ENCODE measurements at regions of chr2 and their contacts with region 1.

Region 1: DNA sequence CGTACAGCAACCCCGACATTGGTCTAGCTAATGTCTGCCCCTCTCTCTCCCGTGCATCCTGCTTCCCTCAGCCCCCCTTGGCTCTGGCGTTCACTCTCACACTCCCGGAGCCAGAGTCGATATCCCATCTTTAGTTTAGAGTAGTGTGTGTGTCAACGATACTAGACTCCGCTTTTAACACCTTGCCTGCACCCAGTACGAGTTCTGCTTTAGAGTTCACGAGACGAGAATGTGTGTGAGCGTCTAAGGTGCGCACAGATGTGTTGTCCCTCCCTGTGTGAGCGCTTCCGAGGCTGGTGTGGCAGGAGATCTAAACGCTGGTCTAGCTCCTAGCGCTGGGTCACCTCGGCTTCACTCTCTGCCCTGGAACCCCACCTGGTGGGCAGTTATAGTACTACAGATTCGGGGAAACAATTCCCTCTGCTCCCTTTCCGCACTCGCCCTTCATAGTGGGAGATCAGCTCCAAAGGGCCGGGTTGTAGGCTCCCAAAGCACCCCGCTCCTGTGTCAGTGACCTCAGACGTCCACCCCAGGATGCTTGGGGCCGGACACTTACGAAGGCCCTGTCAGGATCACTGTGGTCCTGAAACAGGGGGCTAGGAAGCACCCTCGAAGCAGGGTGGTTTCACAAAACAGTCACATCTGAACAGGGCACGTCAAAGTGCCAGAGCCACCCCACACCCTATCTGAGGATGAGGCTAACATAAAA is 2.6 kb upstream of the CYP26B1 start:
- DNase-seq: peak; percentile 78 to 92 (median 88)
- H3K4me3 ChIP-seq: peak overlapping the region; percentile 35 to 56 (median 49)
- H3K27ac ChIP-seq: no peak overlapping the region
- H3K4me1 ChIP-seq: peaks cover 0 to 20% (median 3%) of the 10 kb centered on the region in 3 donors
- H3K27me3 ChIP-seq: peaks cover 34% of the 10 kb centered on the region
- CTCF ChIP-seq: peak; percentile 84

Region 2: GRCh38 chr2:71545572-71546274 is 604.6 kb before region 1 on chr2:
- intact Hi-C with region 1: loop called (anchors 5 kb)
- DNase-seq: peak; percentile 62 to 87 (median 80)
- H3K4me3 ChIP-seq: peak overlapping the region in 1 of 3 donors; percentile 31
- H3K27ac ChIP-seq: peak overlapping the region in 1 of 2 donors; percentile 22
- H3K4me1 ChIP-seq: peaks cover 0 to 5% (median 2%) of the 10 kb centered on the region in 3 donors
- H3K27me3 ChIP-seq: peaks cover 5% of the 10 kb centered on the region
- CTCF ChIP-seq: peak; percentile 73

Region 3: DNA sequence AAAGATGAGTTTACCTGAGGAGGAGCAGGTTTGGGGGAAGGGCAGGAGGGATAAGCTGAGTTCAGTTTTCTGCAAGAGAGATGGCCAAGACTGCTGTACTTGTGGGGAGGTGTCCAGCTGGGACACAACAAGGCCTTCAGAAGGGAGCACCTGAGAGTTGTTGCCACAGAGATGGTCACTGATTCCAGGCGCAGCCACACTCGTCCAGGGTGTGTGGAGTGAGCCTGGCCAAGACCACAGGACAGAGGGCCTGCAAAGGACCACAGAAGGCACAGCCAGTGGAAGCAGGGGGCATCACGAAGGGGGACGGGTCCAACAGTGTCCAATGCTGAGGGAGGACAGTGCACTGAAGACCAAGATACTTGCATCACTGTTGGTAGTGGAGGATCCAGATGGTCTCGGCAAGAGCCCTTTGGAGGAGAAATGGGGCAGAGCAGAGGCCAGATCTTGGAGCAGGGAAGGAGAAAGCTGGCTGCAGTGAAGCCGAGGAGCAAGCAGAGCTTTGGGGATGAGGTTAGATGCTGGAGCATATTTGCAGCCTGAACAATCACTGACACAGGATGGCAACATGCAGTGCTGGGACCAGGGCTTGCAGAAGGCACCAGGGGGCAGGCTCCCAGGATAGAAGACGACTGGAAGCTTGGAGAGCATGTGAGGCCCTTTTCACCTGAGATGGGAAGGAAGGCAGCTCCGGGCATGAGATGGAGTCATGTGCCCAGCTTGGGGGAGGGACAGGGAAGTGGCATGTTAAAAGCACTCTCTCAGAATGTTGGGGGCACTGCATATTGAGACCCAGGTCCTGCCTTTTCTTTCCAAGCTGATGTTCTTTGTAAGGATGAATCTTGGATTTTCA is 216.6 kb before region 1 on chr2:
- intact Hi-C with region 1: loop called (anchors 10 kb)
- DNase-seq: peak in 1 of 5 donors; percentile 29
- H3K4me3 ChIP-seq: no peak overlapping the region
- H3K27ac ChIP-seq: no peak overlapping the region
- H3K4me1 ChIP-seq: no peaks in the 10 kb centered on the region
- H3K27me3 ChIP-seq: no peaks in the 10 kb centered on the region
- CTCF ChIP-seq: no peak

Region 4: GRCh38 chr2:72041638-72042111 is 108.6 kb before region 1 on chr2:
- intact Hi-C with region 1: no loop called
- DNase-seq: no peak
- H3K4me3 ChIP-seq: no peak overlapping the region
- H3K27ac ChIP-seq: no peak overlapping the region
- H3K4me1 ChIP-seq: no peaks in the 10 kb centered on the region
- H3K27me3 ChIP-seq: no peaks in the 10 kb centered on the region
- CTCF ChIP-seq: no peak

Measured in kidney (tissue), 22 donors.